ENCODE measurements at regions of chr17 and their contacts with region 1.

Region 1: DNA sequence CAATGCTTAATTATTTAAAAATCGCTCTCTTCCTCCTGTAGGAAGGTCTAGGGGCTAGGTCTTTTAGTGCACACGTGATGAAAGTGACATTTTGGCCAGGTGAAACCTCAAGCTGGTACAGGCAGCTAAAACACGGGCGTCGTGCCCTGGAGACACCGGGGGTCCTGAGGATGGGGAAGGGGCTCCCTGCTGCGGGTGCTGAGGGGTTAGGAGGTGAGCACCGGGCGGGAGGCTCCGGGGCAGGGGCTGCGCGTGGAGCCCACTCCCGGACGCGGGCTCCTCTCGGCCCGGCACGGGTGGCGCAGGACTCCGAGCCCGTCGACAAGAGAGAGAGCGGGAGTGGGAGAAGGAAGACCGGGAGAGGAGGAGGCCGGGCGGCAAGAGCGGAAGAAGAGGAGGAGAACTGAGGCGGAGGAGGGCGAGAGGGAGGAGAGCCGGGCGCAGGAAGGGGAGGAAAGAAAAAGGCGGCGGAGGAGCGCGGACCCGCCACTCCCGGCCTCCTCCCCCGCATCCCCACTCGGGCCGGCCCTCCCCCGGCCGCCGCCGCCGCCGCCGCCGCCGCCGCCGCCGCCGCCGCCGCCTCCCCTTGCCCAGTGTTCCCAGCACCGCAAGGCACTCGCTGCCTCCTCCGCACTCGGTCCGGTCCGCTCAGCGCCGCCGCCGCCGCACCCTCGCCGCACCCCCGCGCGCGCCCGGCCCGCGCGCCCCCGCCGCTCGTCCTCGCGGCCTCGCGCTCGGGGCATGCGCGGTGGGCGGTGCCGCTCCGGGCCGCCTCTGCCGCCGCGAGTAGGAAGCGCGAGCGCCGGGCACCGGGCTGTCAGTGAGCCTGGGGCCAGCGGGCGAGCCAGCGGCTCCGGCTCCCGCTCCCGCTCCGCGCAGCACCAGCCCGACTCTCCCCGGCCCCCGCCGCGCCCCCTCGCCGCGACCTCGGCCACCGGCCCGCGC is at the start of gene PRKCA:
- DNase-seq: peak; percentile 69
- ATAC-seq: peak; percentile 84
- H3K4me3 ChIP-seq: peak within 1 kb of the TSS; percentile 84
- H3K27ac ChIP-seq: peak within 1 kb of the TSS; percentile 76
- H3K4me1 ChIP-seq: peaks cover 3% of the 10 kb centered on the region
- H3K27me3 ChIP-seq: no peaks in the 10 kb centered on the region
- CTCF ChIP-seq: no peak
- POLR2A ChIP-seq: peak; percentile 92
- RAD21 ChIP-seq: peak; percentile 15; the same call in 1 of the 2 replicates
- total RNA-seq, gene PRKCA: 31.0 and 36.9 TPM in 2 replicates

Region 2: GRCh38 chr17:66255112-66255511 is 47.0 kb before region 1 on chr17:
- CTCF ChIA-PET with region 1: interaction called, 4 read pairs
- POLR2A ChIA-PET with region 1: no interaction called
- dilution Hi-C with region 1: no loop called
- in situ Hi-C with region 1: no loop called
- intact Hi-C with region 1: loop called (anchors 5 kb)
- DNase-seq: peak; percentile 83
- ATAC-seq: peak; percentile 94
- H3K4me3 ChIP-seq: no peak overlapping the region
- H3K27ac ChIP-seq: no peak overlapping the region
- H3K4me1 ChIP-seq: no peaks in the 10 kb centered on the region
- H3K27me3 ChIP-seq: no peaks in the 10 kb centered on the region
- CTCF ChIP-seq: peak; percentile 90
- POLR2A ChIP-seq: peak; percentile 43; the same call in 1 of the 2 replicates
- RAD21 ChIP-seq: peak; percentile 94

Region 3: GRCh38 chr17:66466840-66467367 is 164.8 kb after region 1 on chr17:
- CTCF ChIA-PET with region 1: no interaction called
- POLR2A ChIA-PET with region 1: no interaction called
- dilution Hi-C with region 1: no loop called
- in situ Hi-C with region 1: no loop called
- intact Hi-C with region 1: loop called (anchors 5 kb)
- DNase-seq: peak; percentile 100
- ATAC-seq: peak; percentile 78
- H3K4me3 ChIP-seq: peak overlapping the region; percentile 18; the same call in 1 of the 2 replicates
- H3K27ac ChIP-seq: peak overlapping the region; percentile 18
- H3K4me1 ChIP-seq: peaks cover 37% of the 10 kb centered on the region
- H3K27me3 ChIP-seq: no peaks in the 10 kb centered on the region
- CTCF ChIP-seq: no peak
- POLR2A ChIP-seq: no peak
- RAD21 ChIP-seq: peak; percentile 23; the same call in 1 of the 2 replicates

Region 4: DNA sequence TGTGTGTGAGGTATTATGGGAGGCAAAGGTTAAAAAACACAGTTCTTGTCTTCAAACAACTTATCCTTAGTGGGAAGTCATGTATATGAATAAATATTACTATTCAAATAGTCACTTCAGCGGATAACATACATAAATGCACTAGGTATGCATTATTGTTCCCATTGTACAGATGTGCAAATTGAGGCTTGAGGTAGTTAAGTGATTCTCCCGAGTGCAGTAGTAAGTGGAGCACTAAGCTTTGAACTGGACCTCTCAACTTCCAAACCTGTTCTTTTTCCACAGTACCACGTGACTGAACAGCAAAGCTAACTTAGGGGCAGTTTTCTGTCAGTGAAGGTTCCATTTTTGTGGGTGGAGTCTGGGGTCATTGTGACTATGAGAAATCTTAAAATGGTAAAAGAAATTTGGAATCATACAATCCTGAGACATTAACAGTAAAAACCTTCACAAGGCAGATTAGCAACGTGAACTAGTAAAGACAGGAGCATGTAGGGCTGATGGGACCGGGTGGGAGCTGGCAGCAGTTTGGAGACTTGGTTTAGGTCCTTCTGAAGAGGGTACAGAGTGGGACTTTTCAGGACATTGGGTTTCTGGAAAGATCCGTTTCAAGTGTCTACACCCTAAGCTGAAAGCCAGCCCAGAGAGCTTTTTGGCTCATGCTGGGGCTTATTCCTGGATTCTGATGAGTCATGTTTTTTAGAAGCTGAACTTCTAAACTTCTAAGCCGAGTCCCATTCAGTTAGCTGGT is 205.2 kb after region 1 on chr17:
- CTCF ChIA-PET with region 1: no interaction called
- POLR2A ChIA-PET with region 1: no interaction called
- dilution Hi-C with region 1: no loop called
- in situ Hi-C with region 1: no loop called
- intact Hi-C with region 1: no loop called
- DNase-seq: peak; percentile 75
- ATAC-seq: peak; percentile 59
- H3K4me3 ChIP-seq: no peak overlapping the region
- H3K27ac ChIP-seq: peak overlapping the region; percentile 97
- H3K4me1 ChIP-seq: peaks cover 27% of the 10 kb centered on the region
- H3K27me3 ChIP-seq: no peaks in the 10 kb centered on the region
- CTCF ChIP-seq: no peak
- POLR2A ChIP-seq: no peak
- RAD21 ChIP-seq: no peak

Region 5: GRCh38 chr17:66523378-66524200 is 221.5 kb after region 1 on chr17:
- CTCF ChIA-PET with region 1: no interaction called
- POLR2A ChIA-PET with region 1: no interaction called
- dilution Hi-C with region 1: no loop called
- in situ Hi-C with region 1: no loop called
- intact Hi-C with region 1: no loop called
- DNase-seq: peak; percentile 91
- ATAC-seq: peak; percentile 92
- H3K4me3 ChIP-seq: no peak overlapping the region
- H3K27ac ChIP-seq: peak overlapping the region; percentile 54; the same call in 1 of the 2 replicates
- H3K4me1 ChIP-seq: peaks cover 30% of the 10 kb centered on the region
- H3K27me3 ChIP-seq: no peaks in the 10 kb centered on the region
- CTCF ChIP-seq: peak; percentile 27; the same call in 1 of the 2 replicates
- POLR2A ChIP-seq: no peak
- RAD21 ChIP-seq: peak; percentile 45

Region 6: GRCh38 chr17:66567234-66568170 is 265.4 kb after region 1 on chr17:
- CTCF ChIA-PET with region 1: interaction called, 3 read pairs
- POLR2A ChIA-PET with region 1: no interaction called
- dilution Hi-C with region 1: no loop called
- in situ Hi-C with region 1: no loop called
- intact Hi-C with region 1: loop called (anchors 1 kb)
- DNase-seq: peak; percentile 88
- ATAC-seq: peak; percentile 86
- H3K4me3 ChIP-seq: no peak overlapping the region
- H3K27ac ChIP-seq: peak overlapping the region; percentile 93
- H3K4me1 ChIP-seq: peaks cover 22% of the 10 kb centered on the region
- H3K27me3 ChIP-seq: no peaks in the 10 kb centered on the region
- CTCF ChIP-seq: peak; percentile 89
- POLR2A ChIP-seq: no peak
- RAD21 ChIP-seq: peak; percentile 92

Region 7: GRCh38 chr17:66673668-66674315 is 371.7 kb after region 1 on chr17:
- CTCF ChIA-PET with region 1: no interaction called
- POLR2A ChIA-PET with region 1: no interaction called
- dilution Hi-C with region 1: no loop called
- in situ Hi-C with region 1: no loop called
- intact Hi-C with region 1: loop called (anchors 2 kb)
- DNase-seq: peak; percentile 72
- ATAC-seq: peak; percentile 94
- H3K4me3 ChIP-seq: no peak overlapping the region
- H3K27ac ChIP-seq: no peak overlapping the region
- H3K4me1 ChIP-seq: peaks cover 4% of the 10 kb centered on the region
- H3K27me3 ChIP-seq: no peaks in the 10 kb centered on the region
- CTCF ChIP-seq: peak; percentile 82
- POLR2A ChIP-seq: no peak
- RAD21 ChIP-seq: peak; percentile 92